WTC11 (cell line): ENCODE measurements at regions of chr6 and their contacts with region 1.

Region 1: DNA sequence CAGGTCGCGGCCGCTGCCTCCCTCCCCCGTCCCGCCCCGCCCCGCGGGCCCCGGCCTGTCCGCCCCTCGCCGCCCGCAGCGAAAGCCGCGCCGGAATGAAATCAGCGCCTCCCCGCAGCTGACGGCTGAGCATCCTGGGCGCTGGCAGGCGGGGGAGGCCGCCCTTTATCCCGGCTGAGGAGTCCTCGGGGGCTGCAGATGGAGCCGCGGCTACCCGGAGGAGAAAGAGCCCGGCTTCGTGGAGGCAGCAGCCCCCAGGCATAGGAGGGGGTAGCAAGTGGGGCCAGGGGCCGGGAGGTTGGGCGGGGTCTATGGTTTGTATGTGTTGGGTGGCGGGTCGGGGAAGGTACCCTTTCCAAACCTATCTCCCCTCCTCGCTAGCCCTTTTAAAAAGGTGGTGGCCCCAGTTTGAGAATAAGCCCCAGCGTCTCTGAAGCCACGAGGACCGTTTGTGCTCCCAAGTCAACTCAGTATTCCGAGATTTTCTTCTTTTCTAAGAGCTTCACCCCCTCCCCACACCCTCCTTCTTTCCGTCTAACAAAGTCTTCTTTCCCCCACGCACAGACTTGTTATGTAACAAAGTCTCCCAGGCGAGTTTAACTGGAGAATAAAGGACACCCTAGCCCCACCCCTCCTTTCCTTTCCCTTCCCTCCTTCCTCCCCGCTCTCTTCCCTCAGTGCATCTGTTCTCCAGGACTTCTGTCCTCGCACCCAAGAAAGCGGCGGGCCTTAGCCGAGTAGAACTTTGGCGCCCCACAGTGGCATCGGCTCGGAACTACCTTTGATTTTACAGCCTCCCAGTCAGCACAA is 11.0 kb downstream of the POU3F2 start:
- DNase-seq: peak; percentile 91
- ATAC-seq: peak; percentile 53
- H3K4me3 Mint-ChIP-seq: peak overlapping the region; percentile 73
- H3K27ac Mint-ChIP-seq: no peak overlapping the region
- H3K4me1 Mint-ChIP-seq: peaks cover 47% of the 10 kb centered on the region
- H3K27me3 Mint-ChIP-seq: peaks cover 100% of the 10 kb centered on the region
- CTCF ChIP-seq: peak; percentile 73

Region 2: DNA sequence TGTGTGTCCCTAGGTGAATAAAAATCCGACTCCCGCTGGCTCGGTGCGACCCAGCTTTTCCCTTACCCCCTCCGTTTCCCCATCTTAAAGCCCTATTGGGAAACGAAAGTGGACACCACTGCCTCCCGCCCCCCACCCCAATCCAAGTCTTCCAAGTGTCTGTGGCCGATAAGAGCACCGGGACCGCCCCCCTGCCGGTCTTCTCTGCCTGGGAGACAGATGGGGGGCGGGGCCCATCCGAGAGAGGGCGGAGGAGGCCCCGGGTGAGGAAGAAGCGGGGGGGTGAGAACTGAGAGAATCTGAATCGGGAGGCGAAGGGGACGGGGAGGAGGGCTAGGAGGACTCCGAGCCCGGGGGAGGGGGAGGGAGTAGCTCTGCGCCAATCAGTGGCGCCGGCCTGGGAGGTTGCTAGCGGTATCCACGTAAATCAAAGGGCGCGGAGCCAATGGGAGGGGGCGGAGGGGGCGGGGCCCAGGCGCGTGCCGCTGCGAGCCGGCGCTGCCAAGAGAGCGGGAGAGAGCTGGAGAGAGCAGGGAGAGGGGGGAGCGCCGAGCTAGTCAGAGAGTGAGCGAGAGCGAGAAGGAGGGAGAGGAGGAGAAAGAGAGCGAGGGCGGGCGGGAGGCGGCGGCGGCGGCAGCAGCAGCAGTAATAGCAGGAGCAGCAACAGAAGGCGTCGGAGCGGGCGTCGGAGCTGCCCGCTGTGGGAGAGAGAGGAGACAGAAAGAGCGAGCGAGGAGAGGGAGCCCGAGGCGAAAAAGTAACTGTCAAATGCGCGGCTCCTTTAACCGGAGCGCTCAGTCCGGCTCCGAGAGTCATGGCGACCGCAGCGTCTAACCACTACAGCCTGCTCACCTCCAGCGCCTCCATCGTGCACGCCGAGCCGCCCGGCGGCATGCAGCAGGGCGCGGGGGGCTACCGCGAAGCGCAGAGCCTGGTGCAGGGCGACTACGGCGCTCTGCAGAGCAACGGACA is 11.1 kb before region 1 on chr6 and contains the start of gene POU3F2:
- CTCF ChIA-PET with region 1: interaction called, 6 read pairs
- POLR2A ChIA-PET with region 1: interaction called, 14 read pairs
- DNase-seq: peak; percentile 94
- ATAC-seq: peak; percentile 61
- H3K4me3 Mint-ChIP-seq: peak within 1 kb of the TSS; percentile 76
- H3K27ac Mint-ChIP-seq: no peak within 1 kb of the TSS
- H3K4me1 Mint-ChIP-seq: peaks cover 58% of the 10 kb centered on the region
- H3K27me3 Mint-ChIP-seq: peaks cover 97% of the 10 kb centered on the region
- CTCF ChIP-seq: no peak
- total RNA-seq, gene POU3F2: 0.07 to 0.14 TPM (median 0.14 TPM) in 3 replicates